ENCODE measurements at regions of chr4 and their contacts with region 1.

Region 1: GRCh38 chr4:107824353-107825071 is at the start of gene SGMS2:
- DNase-seq: peak; percentile 35 to 92 (median 74)
- H3K4me3 ChIP-seq: peak within 1 kb of the TSS; percentile 59 to 94 (median 79)
- H3K27ac ChIP-seq: peak within 1 kb of the TSS in 47 of 59 donors; percentile 12 to 88 (median 62)
- H3K27me3 ChIP-seq: no peaks in the 10 kb centered on the region
- CTCF ChIP-seq: peak in 2 of 56 donors; percentile 7 to 21
- total RNA-seq, gene SGMS2: 0.95 to 8.1 (median 3.2) TPM

Region 2: DNA sequence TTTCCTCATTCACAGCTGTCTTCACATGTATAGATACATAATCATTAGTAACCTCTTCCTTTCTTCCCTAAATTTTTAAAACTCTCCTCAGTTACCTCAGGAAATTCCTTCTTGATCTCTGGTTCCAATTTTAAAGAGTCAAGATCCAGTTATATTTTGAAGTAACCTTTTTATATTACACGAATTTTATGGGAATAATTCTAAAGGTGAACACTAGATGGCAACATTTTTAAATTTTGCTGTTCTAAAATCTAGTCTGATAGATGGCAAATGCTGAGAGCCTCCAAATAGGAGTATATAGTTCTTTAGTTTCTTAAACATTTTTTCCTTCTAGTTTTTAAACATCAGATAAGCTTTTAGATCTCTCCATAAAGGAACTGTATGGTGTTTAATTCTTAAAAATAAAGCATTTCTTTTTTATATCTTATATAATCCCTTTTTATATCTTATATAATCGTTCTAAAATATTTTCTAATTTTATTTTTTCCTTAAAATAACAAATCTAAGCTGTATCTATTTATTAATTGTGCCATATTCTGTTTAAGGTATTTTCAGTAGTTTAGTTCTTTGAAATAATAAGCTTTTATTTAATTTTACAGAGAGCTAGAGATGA is 66.5 kb before region 1 on chr4:
- intact Hi-C with region 1: loop called in 1 of 2 experiments (anchors 10 kb)
- DNase-seq: no peak
- H3K4me3 ChIP-seq: no peak overlapping the region
- H3K27ac ChIP-seq: no peak overlapping the region
- H3K27me3 ChIP-seq: peaks cover 0 to 4% (median 0%) of the 10 kb centered on the region in 45 donors
- CTCF ChIP-seq: peak; percentile 56 to 88 (median 73)

Region 3: GRCh38 chr4:107978716-107979451 is 154.4 kb after region 1 on chr4:
- intact Hi-C with region 1: loop called in 1 of 2 experiments (anchors 10 kb)
- DNase-seq: peak in 8 of 10 donors; percentile 32 to 82 (median 55)
- H3K4me3 ChIP-seq: peak overlapping the region; percentile 1 to 69 (median 46)
- H3K27ac ChIP-seq: peak overlapping the region in 58 of 59 donors; percentile 26 to 95 (median 84)
- H3K27me3 ChIP-seq: no peaks in the 10 kb centered on the region
- CTCF ChIP-seq: peak in 1 of 56 donors; percentile 12

Measured in dorsolateral prefrontal cortex (tissue), 120 donors.